ENCODE measurements at regions of chr6 and their contacts with region 1.

Region 1: GRCh38 chr6:121305957-121306607 is 28.2 kb downstream of the TBC1D32 start:
- DNase-seq: no peak
- ATAC-seq: no peak
- H3K4me3 Mint-ChIP-seq: no peak overlapping the region
- H3K27ac Mint-ChIP-seq: no peak overlapping the region
- H3K4me1 Mint-ChIP-seq: peaks cover 6% of the 10 kb centered on the region
- H3K27me3 Mint-ChIP-seq: no peaks in the 10 kb centered on the region

Region 2: DNA sequence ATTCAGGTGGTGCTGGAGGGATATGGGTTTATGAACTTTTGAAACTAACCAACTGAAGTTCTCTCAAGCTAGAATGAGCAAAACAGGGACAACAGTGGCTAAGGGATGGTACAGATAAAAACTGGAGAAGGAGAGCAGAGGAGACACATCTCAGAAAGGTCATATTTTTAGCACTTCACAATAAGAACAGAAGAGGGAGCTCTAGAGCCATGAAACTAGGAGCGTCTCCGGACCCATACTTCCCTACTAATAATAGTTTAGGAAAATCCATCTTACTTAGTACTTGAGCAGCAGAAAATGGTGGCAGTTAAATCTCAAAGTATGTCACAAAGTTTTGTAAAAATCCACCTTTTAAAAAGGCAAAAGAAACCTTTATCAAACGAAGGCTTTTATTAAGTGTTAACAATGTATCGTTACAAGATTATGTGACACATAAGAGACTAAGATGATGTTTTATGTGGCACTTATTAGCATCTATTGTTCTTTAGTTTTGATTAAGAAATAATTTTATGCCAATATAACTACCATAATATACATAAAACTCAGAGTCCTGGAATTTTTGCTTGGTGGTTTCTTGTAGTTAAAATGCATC is 250.4 kb before region 1 on chr6:
- CTCF ChIA-PET with region 1: interaction called, 36 read pairs
- POLR2A ChIA-PET with region 1: no interaction called
- DNase-seq: no peak
- ATAC-seq: no peak
- H3K4me3 Mint-ChIP-seq: no peak overlapping the region
- H3K27ac Mint-ChIP-seq: no peak overlapping the region
- H3K4me1 Mint-ChIP-seq: no peaks in the 10 kb centered on the region
- H3K27me3 Mint-ChIP-seq: no peaks in the 10 kb centered on the region

Region 3: GRCh38 chr6:121143476-121143875 is 162.6 kb before region 1 on chr6:
- CTCF ChIA-PET with region 1: no interaction called
- POLR2A ChIA-PET with region 1: no interaction called
- DNase-seq: no peak
- ATAC-seq: no peak
- H3K4me3 Mint-ChIP-seq: no peak overlapping the region
- H3K27ac Mint-ChIP-seq: no peak overlapping the region
- H3K4me1 Mint-ChIP-seq: no peaks in the 10 kb centered on the region
- H3K27me3 Mint-ChIP-seq: no peaks in the 10 kb centered on the region

Region 4: DNA sequence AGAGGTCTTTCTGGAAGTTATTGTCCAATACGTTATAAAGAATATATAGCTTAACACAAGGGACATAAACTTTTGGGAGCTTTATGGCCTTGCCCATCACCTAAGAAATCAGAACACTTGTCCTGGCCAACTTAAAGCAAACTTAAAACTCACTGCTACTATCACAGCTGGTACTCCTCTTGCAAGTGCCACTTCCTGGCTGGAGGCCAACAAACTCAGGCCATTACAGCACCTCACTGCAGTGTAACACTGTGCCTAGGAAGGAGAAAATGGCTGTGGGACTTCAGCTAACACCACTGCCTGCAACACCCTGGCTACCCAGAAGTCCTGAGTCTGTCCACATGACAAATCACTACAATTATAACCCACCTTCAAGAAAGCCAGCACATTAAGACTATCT is 61.3 kb before region 1 on chr6:
- CTCF ChIA-PET with region 1: no interaction called
- POLR2A ChIA-PET with region 1: no interaction called
- DNase-seq: no peak
- ATAC-seq: no peak
- H3K4me3 Mint-ChIP-seq: no peak overlapping the region
- H3K27ac Mint-ChIP-seq: no peak overlapping the region
- H3K4me1 Mint-ChIP-seq: peaks cover 16% of the 10 kb centered on the region
- H3K27me3 Mint-ChIP-seq: no peaks in the 10 kb centered on the region